Adrenal gland (tissue), 19 donors: ENCODE measurements at regions of chr17 and their contacts with region 1.

Region 1: GRCh38 chr17:38415250-38416194 is 12.7 kb upstream of the ARHGAP23 start:
- DNase-seq: peak in 1 of 7 donors; percentile 74
- H3K4me3 ChIP-seq: no peak overlapping the region
- H3K27ac ChIP-seq: peak overlapping the region in 1 of 5 donors; percentile 66
- H3K4me1 ChIP-seq: peaks cover 8 to 22% of the 10 kb centered on the region in 2 donors
- H3K27me3 ChIP-seq: peaks cover 4% of the 10 kb centered on the region
- CTCF ChIP-seq: no peak
- POLR2A ChIP-seq: no peak

Region 2: GRCh38 chr17:38351412-38352222 is 63.9 kb before region 1 on chr17 and contains the start of gene SOCS7:
- intact Hi-C with region 1: loop called (anchors 2 to 5 kb)
- DNase-seq: peak; percentile 92 to 96 (median 94)
- H3K4me3 ChIP-seq: peak within 1 kb of the TSS; percentile 21 to 92 (median 57)
- H3K27ac ChIP-seq: peak within 1 kb of the TSS in 4 of 5 donors; percentile 61 to 92 (median 90)
- H3K4me1 ChIP-seq: peaks cover 7 to 42% of the 10 kb centered on the region in 2 donors
- H3K27me3 ChIP-seq: no peaks in the 10 kb centered on the region
- CTCF ChIP-seq: no peak
- POLR2A ChIP-seq: peak; percentile 36 to 67
- total RNA-seq, gene SOCS7: 17.2 to 51.3 (median 20.6) TPM